CD4-positive, alpha-beta memory T cell (primary cell): ENCODE measurements at regions of chr1 and their contacts with region 1.

Region 1: GRCh38 chr1:198681831-198682759 is 43.3 kb downstream of the PTPRC start:
- DNase-seq: peak; percentile 87 to 96 (median 94)
- H3K4me3 ChIP-seq: peak overlapping the region in 1 of 2 donors; percentile 33
- H3K4me3 Mint-ChIP-seq: peak overlapping the region; percentile 63 to 87 (median 81)
- H3K27ac ChIP-seq: peak overlapping the region; percentile 94
- H3K27ac Mint-ChIP-seq: peak overlapping the region; percentile 97 to 99 (median 99)
- H3K4me1 ChIP-seq: peaks cover 95% of the 10 kb centered on the region
- H3K4me1 Mint-ChIP-seq: peaks cover 64 to 92% (median 73%) of the 10 kb centered on the region in 4 donors
- H3K27me3 ChIP-seq: no peaks in the 10 kb centered on the region
- H3K27me3 Mint-ChIP-seq: no peaks in the 10 kb centered on the region

Region 2: GRCh38 chr1:198088360-198089071 is 593.6 kb before region 1 on chr1:
- CTCF ChIA-PET with region 1: no interaction called
- POLR2A ChIA-PET with region 1: no interaction called
- intact Hi-C with region 1: loop called (anchors 10 kb)
- DNase-seq: peak in 4 of 5 donors; percentile 32 to 41 (median 37)
- H3K4me3 ChIP-seq: no peak overlapping the region
- H3K4me3 Mint-ChIP-seq: no peak overlapping the region
- H3K27ac ChIP-seq: no peak overlapping the region
- H3K27ac Mint-ChIP-seq: no peak overlapping the region
- H3K4me1 ChIP-seq: no peaks in the 10 kb centered on the region
- H3K4me1 Mint-ChIP-seq: peaks cover 0 to 2% (median under 1%) of the 10 kb centered on the region in 4 donors
- H3K27me3 ChIP-seq: no peaks in the 10 kb centered on the region
- H3K27me3 Mint-ChIP-seq: peaks cover 2 to 4% of the 10 kb centered on the region in 2 donors

Region 3: GRCh38 chr1:198520524-198521254 is 161.4 kb before region 1 on chr1:
- CTCF ChIA-PET with region 1: interaction called, 26 read pairs
- POLR2A ChIA-PET with region 1: interaction called, 104 read pairs
- intact Hi-C with region 1: loop called (anchors 1 kb)
- DNase-seq: peak in 4 of 5 donors; percentile 18 to 44 (median 25)
- H3K4me3 ChIP-seq: peak overlapping the region; percentile 19 to 46
- H3K4me3 Mint-ChIP-seq: peak overlapping the region; percentile 77 to 90 (median 80)
- H3K27ac ChIP-seq: peak overlapping the region; percentile 57
- H3K27ac Mint-ChIP-seq: peak overlapping the region; percentile 81 to 94 (median 91)
- H3K4me1 ChIP-seq: peaks cover 82% of the 10 kb centered on the region
- H3K4me1 Mint-ChIP-seq: peaks cover 57 to 84% (median 64%) of the 10 kb centered on the region in 4 donors
- H3K27me3 ChIP-seq: no peaks in the 10 kb centered on the region
- H3K27me3 Mint-ChIP-seq: no peaks in the 10 kb centered on the region

Region 4: GRCh38 chr1:198606020-198606438 is 76.1 kb before region 1 on chr1:
- CTCF ChIA-PET with region 1: interaction called, 5 read pairs
- POLR2A ChIA-PET with region 1: interaction called, 38 read pairs
- intact Hi-C with region 1: no loop called
- DNase-seq: no peak
- H3K4me3 ChIP-seq: no peak overlapping the region
- H3K4me3 Mint-ChIP-seq: peak overlapping the region in 2 of 8 donors; percentile 21 to 51
- H3K27ac ChIP-seq: no peak overlapping the region
- H3K27ac Mint-ChIP-seq: peak overlapping the region in 3 of 7 donors; percentile 43 to 77 (median 56)
- H3K4me1 ChIP-seq: peaks cover 66% of the 10 kb centered on the region
- H3K4me1 Mint-ChIP-seq: peaks cover 45 to 66% (median 56%) of the 10 kb centered on the region in 4 donors
- H3K27me3 ChIP-seq: no peaks in the 10 kb centered on the region
- H3K27me3 Mint-ChIP-seq: no peaks in the 10 kb centered on the region

Region 5: GRCh38 chr1:198633675-198634121 is 48.4 kb before region 1 on chr1:
- CTCF ChIA-PET with region 1: interaction called, 16 read pairs
- POLR2A ChIA-PET with region 1: interaction called, 227 read pairs
- intact Hi-C with region 1: no loop called
- DNase-seq: no peak
- H3K4me3 ChIP-seq: no peak overlapping the region
- H3K4me3 Mint-ChIP-seq: peak overlapping the region in 7 of 8 donors; percentile 1 to 76 (median 36)
- H3K27ac ChIP-seq: no peak overlapping the region
- H3K27ac Mint-ChIP-seq: peak overlapping the region; percentile 29 to 88 (median 62)
- H3K4me1 ChIP-seq: peaks cover 96% of the 10 kb centered on the region
- H3K4me1 Mint-ChIP-seq: peaks cover 65 to 85% (median 70%) of the 10 kb centered on the region in 4 donors
- H3K27me3 ChIP-seq: no peaks in the 10 kb centered on the region
- H3K27me3 Mint-ChIP-seq: no peaks in the 10 kb centered on the region

Region 6: DNA sequence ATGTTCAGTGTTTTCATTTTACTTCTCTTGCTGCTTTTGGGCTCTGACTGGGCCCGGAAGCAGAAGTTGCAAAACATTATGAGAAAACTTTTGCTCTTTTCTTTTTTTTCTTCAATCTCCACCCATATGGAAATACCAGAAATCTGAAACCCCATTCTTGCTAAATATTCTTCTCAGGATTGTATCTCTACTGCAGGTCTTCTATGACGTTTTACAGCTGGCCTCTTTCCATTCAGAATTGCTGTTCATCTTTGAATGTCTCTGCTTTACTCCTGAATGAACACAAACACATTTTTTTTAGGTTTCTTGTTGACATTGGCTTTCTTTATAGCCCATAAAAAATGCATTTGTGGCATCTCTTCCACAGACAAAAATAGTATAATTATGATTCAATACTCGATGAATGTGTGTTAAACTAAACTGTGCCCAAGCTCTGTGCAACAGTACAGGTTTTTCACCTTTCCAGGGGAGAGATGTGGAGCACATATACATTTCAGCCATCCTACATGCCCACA is 24.5 kb before region 1 on chr1:
- CTCF ChIA-PET with region 1: interaction called, 11 read pairs
- POLR2A ChIA-PET with region 1: interaction called, 449 read pairs
- intact Hi-C with region 1: loop called (anchors 1 kb)
- DNase-seq: peak; percentile 58 to 73 (median 65)
- H3K4me3 ChIP-seq: peak overlapping the region; percentile 22 to 33
- H3K4me3 Mint-ChIP-seq: peak overlapping the region; percentile 59 to 87 (median 79)
- H3K27ac ChIP-seq: peak overlapping the region; percentile 93
- H3K27ac Mint-ChIP-seq: peak overlapping the region; percentile 96 to 99 (median 98)
- H3K4me1 ChIP-seq: peaks cover 91% of the 10 kb centered on the region
- H3K4me1 Mint-ChIP-seq: peaks cover 43 to 65% (median 58%) of the 10 kb centered on the region in 4 donors
- H3K27me3 ChIP-seq: no peaks in the 10 kb centered on the region
- H3K27me3 Mint-ChIP-seq: no peaks in the 10 kb centered on the region

Region 7: DNA sequence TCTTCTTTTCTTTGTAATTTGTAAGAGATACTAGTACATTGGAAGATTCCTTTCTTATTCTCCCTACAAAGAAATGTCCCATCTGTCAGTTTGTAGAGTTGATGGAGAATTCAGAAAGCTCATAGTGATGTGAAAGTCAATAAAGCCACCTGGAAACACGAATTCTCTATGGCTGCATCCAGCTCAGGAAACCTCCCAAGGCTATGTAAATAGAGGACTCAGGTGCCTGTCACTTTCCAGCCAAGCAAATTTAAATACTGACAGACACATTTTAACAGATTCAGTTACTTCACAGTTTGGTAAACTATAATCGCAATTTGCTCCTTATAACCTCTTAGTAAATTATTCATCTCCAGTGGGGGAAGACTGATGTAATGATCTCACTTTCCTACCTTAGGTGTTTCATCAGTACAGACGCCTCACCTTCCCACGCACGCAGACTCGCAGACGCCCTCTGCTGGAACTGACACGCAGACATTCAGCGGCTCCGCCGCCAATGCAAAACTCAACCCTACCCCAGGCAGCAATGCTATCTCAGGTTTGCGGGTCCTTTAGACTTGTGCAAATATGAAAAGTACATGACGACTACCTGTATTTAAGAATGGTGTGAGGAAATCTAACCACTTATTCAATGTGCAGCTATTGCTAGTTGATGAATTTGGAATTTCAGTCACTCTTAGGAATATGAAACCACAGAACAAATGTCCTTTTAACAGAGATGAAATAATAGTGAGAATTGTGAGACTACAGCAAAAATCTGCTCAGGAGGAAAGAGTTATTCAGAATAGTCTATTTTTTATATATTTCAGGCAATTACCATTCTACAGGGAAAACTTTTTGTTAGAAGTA is 17.3 kb after region 1 on chr1:
- CTCF ChIA-PET with region 1: interaction called, 5 read pairs
- POLR2A ChIA-PET with region 1: interaction called, 36 read pairs
- intact Hi-C with region 1: loop called (anchors 1 kb)
- DNase-seq: peak; percentile 60 to 72 (median 66)
- H3K4me3 ChIP-seq: no peak overlapping the region
- H3K4me3 Mint-ChIP-seq: peak overlapping the region in 6 of 8 donors; percentile 26 to 76 (median 52)
- H3K27ac ChIP-seq: peak overlapping the region; percentile 33
- H3K27ac Mint-ChIP-seq: peak overlapping the region; percentile 85 to 91 (median 87)
- H3K4me1 ChIP-seq: peaks cover 87% of the 10 kb centered on the region
- H3K4me1 Mint-ChIP-seq: peaks cover 59 to 82% (median 70%) of the 10 kb centered on the region in 4 donors
- H3K27me3 ChIP-seq: no peaks in the 10 kb centered on the region
- H3K27me3 Mint-ChIP-seq: no peaks in the 10 kb centered on the region